ENCODE measurements at regions of chr6 and their contacts with region 1.

Region 1: DNA sequence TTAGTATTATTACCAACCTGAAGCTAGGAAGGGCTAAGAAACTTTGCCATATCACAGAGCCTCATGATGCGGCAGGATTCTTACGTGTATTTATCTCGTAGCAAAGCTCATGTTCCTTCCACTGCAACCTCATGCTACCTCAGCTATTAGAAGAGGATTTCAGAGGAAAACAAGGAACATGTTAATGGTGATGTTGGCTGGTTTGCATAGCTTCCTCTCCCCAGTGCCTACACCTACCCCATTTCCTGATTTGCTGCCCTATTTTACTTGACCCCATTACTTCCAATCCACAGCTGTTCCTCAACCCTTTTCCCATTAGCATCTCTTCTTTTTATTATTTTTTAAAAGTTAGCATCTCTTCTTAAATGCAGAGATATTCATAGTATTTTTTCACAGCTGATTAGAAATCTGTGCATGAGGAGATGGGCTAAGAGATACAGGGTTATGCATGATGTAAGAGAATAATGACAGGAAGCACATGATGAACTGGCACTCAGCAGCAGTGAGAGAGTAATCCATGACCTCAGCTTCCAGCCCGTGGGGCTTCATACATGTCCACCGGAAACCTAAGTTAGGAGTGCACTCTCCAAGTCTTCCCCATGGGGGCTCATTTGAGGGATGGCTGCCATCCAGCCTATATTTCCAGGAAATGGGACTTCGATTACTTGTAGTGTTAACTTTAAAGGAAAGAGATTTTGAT is 106.1 kb upstream of the ASF1A start:
- DNase-seq: no peak
- H3K4me3 ChIP-seq: no peak overlapping the region
- H3K27ac ChIP-seq: peak overlapping the region in 5 of 8 donors; percentile 15 to 53 (median 44)
- H3K4me1 ChIP-seq: peaks cover 6 to 23% (median 15%) of the 10 kb centered on the region in 6 donors
- H3K27me3 ChIP-seq: no peaks in the 10 kb centered on the region
- CTCF ChIP-seq: no peak
- POLR2A ChIP-seq: no peak

Region 2: DNA sequence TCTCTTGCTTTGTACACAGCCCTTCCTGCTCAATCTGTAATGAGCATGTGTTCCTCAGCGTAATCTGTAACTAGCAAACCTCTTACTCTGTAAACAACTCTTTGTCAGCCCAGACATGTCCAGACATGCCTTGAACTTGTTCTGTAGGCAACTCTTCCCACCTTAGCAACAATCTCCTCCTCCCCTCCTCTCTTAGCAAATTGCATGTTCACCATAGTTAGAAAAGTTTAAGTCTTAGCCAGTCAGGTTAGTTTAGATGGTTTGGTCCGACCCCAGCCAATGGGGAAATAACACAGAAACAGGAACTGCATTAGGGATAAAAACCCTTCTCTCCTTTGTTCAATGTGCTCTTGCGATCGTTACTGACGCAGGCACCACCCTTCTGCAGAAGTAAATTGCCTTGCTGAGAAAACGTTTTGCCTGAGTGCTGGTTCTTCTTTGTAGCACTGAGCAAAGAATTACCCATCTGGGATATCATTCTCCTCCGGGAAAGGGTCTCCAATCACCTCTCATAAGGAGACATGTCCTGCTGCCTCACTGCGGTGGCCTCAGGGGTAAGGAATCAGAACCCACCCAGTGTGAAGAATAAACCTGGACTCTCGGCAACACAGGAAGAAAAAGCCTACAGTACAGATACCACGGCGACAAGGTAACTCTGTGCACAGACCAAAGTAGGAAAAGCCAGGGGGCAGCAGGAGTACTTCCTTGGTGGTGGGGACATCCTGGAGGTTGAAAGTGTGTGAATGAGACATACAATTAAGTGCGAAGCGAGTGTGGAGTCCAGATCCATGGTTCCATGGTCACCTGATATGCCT is 213.6 kb before region 1 on chr6:
- intact Hi-C with region 1: loop called (anchors 10 kb)
- DNase-seq: no peak
- H3K4me3 ChIP-seq: no peak overlapping the region
- H3K27ac ChIP-seq: no peak overlapping the region
- H3K4me1 ChIP-seq: no peaks in the 10 kb centered on the region
- H3K27me3 ChIP-seq: no peaks in the 10 kb centered on the region
- CTCF ChIP-seq: no peak
- POLR2A ChIP-seq: no peak